Activated T-helper 1 cell treated with anti-CD3 and anti-CD28 coated beads, Interleukin-12 subunit alpha, Interleukin-12 subunit beta, Interleukin-2, Interleukin-4 antibody, amounts not matched to agents 30 ng/mL and 10 ng/mL and 1 ng/mL, durations not matched to agents 14 hours and 24 hours and 36 hours (primary cell): ENCODE measurements at regions of chr5 and their contacts with region 1.

Region 1: DNA sequence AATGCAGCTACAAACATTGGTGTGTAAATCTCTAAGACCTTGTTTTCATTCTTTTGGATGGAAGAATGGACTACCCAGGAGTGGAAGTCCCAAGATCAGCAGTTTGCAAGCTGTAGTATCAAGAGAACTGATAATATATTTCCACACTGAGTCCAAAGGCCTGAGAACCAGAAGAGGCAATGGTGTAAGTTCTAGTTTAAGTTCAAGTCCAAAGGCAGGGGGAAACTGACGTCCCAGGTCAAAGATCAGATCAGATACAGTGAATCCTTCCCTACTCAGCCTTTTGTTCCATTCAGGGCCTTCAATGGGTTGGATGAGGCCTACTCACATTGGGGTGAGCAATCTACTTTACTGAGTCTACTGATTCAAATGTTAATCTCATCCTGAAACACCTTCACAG is 80.3 kb upstream of the ERBIN start:
- DNase-seq: no peak
- H3K4me3 Mint-ChIP-seq: no peak overlapping the region
- H3K27ac Mint-ChIP-seq: no peak overlapping the region
- H3K4me1 Mint-ChIP-seq: peaks cover 6% of the 10 kb centered on the region
- H3K27me3 Mint-ChIP-seq: peaks cover 8% of the 10 kb centered on the region

Region 2: GRCh38 chr5:65742565-65743231 is 103.4 kb before region 1 on chr5:
- intact Hi-C with region 1: loop called (anchors 5 kb)
- DNase-seq: no peak
- H3K4me3 Mint-ChIP-seq: no peak overlapping the region
- H3K27ac Mint-ChIP-seq: no peak overlapping the region
- H3K4me1 Mint-ChIP-seq: peaks cover 16% of the 10 kb centered on the region
- H3K27me3 Mint-ChIP-seq: peaks cover 3% of the 10 kb centered on the region

Region 3: GRCh38 chr5:65818592-65818991 is 27.5 kb before region 1 on chr5:
- intact Hi-C with region 1: no loop called
- DNase-seq: no peak
- H3K4me3 Mint-ChIP-seq: no peak overlapping the region
- H3K27ac Mint-ChIP-seq: no peak overlapping the region
- H3K4me1 Mint-ChIP-seq: peaks cover 18% of the 10 kb centered on the region
- H3K27me3 Mint-ChIP-seq: no peaks in the 10 kb centered on the region

Region 4: DNA sequence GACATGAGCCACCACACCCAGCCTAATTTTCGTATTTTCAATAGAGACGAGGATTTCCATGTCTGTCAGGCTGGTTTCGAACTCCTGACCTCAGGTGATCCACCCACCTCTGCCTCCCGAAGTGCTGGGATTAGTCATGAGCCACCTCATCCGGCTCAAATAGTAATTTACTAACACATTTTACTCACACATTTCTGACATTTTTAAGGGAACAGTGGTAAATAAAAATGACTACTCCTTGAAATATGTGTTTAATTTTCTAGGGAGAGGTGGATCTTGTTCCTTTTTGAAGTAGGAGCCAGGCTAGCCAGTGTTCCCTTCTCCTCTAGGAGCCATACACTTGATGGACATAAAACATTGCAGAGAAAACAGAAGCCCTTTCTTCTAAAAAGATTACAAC is 25.1 kb after region 1 on chr5:
- intact Hi-C with region 1: no loop called
- DNase-seq: no peak
- H3K4me3 Mint-ChIP-seq: no peak overlapping the region
- H3K27ac Mint-ChIP-seq: no peak overlapping the region
- H3K4me1 Mint-ChIP-seq: peaks cover 17% of the 10 kb centered on the region
- H3K27me3 Mint-ChIP-seq: no peaks in the 10 kb centered on the region

Region 5: DNA sequence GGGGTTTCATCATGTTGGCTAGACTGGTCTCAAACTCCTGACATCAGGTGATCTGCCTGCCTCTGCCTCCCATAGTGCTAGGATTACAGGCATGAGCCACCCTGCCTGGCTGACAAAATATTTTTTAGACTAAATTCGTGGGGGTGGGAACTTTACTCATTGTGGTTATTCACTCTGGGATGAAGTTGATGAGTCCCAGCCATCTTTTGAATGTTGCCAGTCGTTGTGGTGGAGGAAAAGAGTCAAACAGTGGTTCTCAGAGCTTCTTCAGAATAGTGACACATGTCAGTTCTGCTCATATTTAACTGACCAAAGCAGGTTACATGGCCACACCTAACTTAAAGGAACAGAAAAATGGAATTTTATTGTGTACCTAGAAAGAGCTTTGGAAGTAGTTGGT is 304.9 kb after region 1 on chr5:
- intact Hi-C with region 1: no loop called
- DNase-seq: no peak
- H3K4me3 Mint-ChIP-seq: no peak overlapping the region
- H3K27ac Mint-ChIP-seq: peak overlapping the region; percentile 82
- H3K4me1 Mint-ChIP-seq: peaks cover 46% of the 10 kb centered on the region
- H3K27me3 Mint-ChIP-seq: no peaks in the 10 kb centered on the region